Caco-2 (cell line): ENCODE measurements at regions of chr1 and their contacts with region 1.

Region 1: DNA sequence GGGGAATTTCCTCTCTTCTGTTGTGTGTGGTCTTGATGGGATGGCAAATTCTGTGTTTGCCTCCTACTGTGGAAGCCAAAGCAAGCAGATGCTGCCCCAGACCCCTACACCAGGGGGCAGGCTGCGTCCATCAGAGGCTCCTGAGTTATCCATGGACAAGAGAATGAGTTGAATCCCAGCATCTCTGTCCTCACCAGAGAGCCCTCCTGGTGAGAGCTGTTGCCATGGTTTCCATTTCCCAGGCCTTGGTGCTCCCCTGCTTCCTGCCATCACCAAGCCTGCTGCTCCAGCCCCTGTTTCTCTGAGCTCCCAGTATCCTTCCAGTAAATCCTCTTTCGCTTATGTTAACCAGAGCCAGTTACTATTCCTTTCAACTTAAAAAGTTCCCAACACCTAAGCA is 20.4 kb upstream of the GNG12 start:
- DNase-seq: peak; percentile 51 to 69
- H3K4me3 ChIP-seq: no peak overlapping the region
- H3K4me3 Mint-ChIP-seq: no peak overlapping the region
- H3K27ac Mint-ChIP-seq: no peak overlapping the region
- H3K4me1 ChIP-seq: no peaks in the 10 kb centered on the region
- H3K4me1 Mint-ChIP-seq: no peaks in the 10 kb centered on the region
- H3K27me3 ChIP-seq: no peaks in the 10 kb centered on the region
- H3K27me3 Mint-ChIP-seq: peaks cover 11% of the 10 kb centered on the region
- CTCF ChIP-seq: peak; percentile 78 to 79

Region 2: GRCh38 chr1:67766141-67766978 is 87.3 kb before region 1 on chr1:
- CTCF ChIA-PET with region 1: interaction called, 3 read pairs
- POLR2A ChIA-PET with region 1: no interaction called
- intact Hi-C with region 1: loop called (anchors 1 kb)
- DNase-seq: peak in 1 of 2 experiments; percentile 37
- H3K4me3 ChIP-seq: no peak overlapping the region
- H3K4me3 Mint-ChIP-seq: no peak overlapping the region
- H3K27ac Mint-ChIP-seq: no peak overlapping the region
- H3K4me1 ChIP-seq: no peaks in the 10 kb centered on the region
- H3K4me1 Mint-ChIP-seq: peaks cover 20% of the 10 kb centered on the region
- H3K27me3 ChIP-seq: no peaks in the 10 kb centered on the region
- H3K27me3 Mint-ChIP-seq: no peaks in the 10 kb centered on the region
- CTCF ChIP-seq: peak; percentile 46 to 54

Region 3: GRCh38 chr1:67957066-67957465 is 103.4 kb after region 1 on chr1:
- CTCF ChIA-PET with region 1: no interaction called
- POLR2A ChIA-PET with region 1: no interaction called
- intact Hi-C with region 1: loop called (anchors 10 kb)
- DNase-seq: no peak
- H3K4me3 ChIP-seq: no peak overlapping the region
- H3K4me3 Mint-ChIP-seq: no peak overlapping the region
- H3K27ac Mint-ChIP-seq: no peak overlapping the region
- H3K4me1 ChIP-seq: no peaks in the 10 kb centered on the region
- H3K4me1 Mint-ChIP-seq: no peaks in the 10 kb centered on the region
- H3K27me3 ChIP-seq: no peaks in the 10 kb centered on the region
- H3K27me3 Mint-ChIP-seq: peaks cover 3% of the 10 kb centered on the region
- CTCF ChIP-seq: no peak

Region 4: GRCh38 chr1:68010090-68010489 is 156.4 kb after region 1 on chr1:
- CTCF ChIA-PET with region 1: interaction called, 3 read pairs
- POLR2A ChIA-PET with region 1: no interaction called
- intact Hi-C with region 1: loop called (anchors 1 kb)
- DNase-seq: no peak
- H3K4me3 ChIP-seq: no peak overlapping the region
- H3K4me3 Mint-ChIP-seq: no peak overlapping the region
- H3K27ac Mint-ChIP-seq: no peak overlapping the region
- H3K4me1 ChIP-seq: no peaks in the 10 kb centered on the region
- H3K4me1 Mint-ChIP-seq: no peaks in the 10 kb centered on the region
- H3K27me3 ChIP-seq: no peaks in the 10 kb centered on the region
- H3K27me3 Mint-ChIP-seq: peaks cover 10% of the 10 kb centered on the region
- CTCF ChIP-seq: no peak

Region 5: GRCh38 chr1:68111519-68112436 is 258.1 kb after region 1 on chr1:
- CTCF ChIA-PET with region 1: interaction called, 13 read pairs
- POLR2A ChIA-PET with region 1: no interaction called
- intact Hi-C with region 1: loop called (anchors 1 kb)
- DNase-seq: peak in 1 of 2 experiments; percentile 47
- H3K4me3 ChIP-seq: no peak overlapping the region
- H3K4me3 Mint-ChIP-seq: no peak overlapping the region
- H3K27ac Mint-ChIP-seq: no peak overlapping the region
- H3K4me1 ChIP-seq: no peaks in the 10 kb centered on the region
- H3K4me1 Mint-ChIP-seq: no peaks in the 10 kb centered on the region
- H3K27me3 ChIP-seq: no peaks in the 10 kb centered on the region
- H3K27me3 Mint-ChIP-seq: no peaks in the 10 kb centered on the region
- CTCF ChIP-seq: peak; percentile 51

Region 6: GRCh38 chr1:68346188-68346808 is 492.6 kb after region 1 on chr1:
- CTCF ChIA-PET with region 1: no interaction called
- POLR2A ChIA-PET with region 1: no interaction called
- intact Hi-C with region 1: loop called (anchors 1 kb)
- DNase-seq: peak in 1 of 2 experiments; percentile 1
- H3K4me3 ChIP-seq: no peak overlapping the region
- H3K4me3 Mint-ChIP-seq: no peak overlapping the region
- H3K27ac Mint-ChIP-seq: no peak overlapping the region
- H3K4me1 ChIP-seq: no peaks in the 10 kb centered on the region
- H3K4me1 Mint-ChIP-seq: no peaks in the 10 kb centered on the region
- H3K27me3 ChIP-seq: no peaks in the 10 kb centered on the region
- H3K27me3 Mint-ChIP-seq: peaks cover 4% of the 10 kb centered on the region
- CTCF ChIP-seq: peak; percentile 15 to 34